Activated CD4-positive, alpha-beta memory T cell treated with anti-CD3 and anti-CD28 coated beads for 36 hours (primary cell): ENCODE measurements at regions of chr7 and their contacts with region 1.

Region 1: GRCh38 chr7:128387216-128388144 is 22.3 kb downstream of the IMPDH1 start:
- DNase-seq: peak; percentile 79
- H3K4me3 Mint-ChIP-seq: no peak overlapping the region
- H3K27ac Mint-ChIP-seq: no peak overlapping the region
- H3K4me1 Mint-ChIP-seq: no peaks in the 10 kb centered on the region
- H3K27me3 Mint-ChIP-seq: no peaks in the 10 kb centered on the region

Region 2: DNA sequence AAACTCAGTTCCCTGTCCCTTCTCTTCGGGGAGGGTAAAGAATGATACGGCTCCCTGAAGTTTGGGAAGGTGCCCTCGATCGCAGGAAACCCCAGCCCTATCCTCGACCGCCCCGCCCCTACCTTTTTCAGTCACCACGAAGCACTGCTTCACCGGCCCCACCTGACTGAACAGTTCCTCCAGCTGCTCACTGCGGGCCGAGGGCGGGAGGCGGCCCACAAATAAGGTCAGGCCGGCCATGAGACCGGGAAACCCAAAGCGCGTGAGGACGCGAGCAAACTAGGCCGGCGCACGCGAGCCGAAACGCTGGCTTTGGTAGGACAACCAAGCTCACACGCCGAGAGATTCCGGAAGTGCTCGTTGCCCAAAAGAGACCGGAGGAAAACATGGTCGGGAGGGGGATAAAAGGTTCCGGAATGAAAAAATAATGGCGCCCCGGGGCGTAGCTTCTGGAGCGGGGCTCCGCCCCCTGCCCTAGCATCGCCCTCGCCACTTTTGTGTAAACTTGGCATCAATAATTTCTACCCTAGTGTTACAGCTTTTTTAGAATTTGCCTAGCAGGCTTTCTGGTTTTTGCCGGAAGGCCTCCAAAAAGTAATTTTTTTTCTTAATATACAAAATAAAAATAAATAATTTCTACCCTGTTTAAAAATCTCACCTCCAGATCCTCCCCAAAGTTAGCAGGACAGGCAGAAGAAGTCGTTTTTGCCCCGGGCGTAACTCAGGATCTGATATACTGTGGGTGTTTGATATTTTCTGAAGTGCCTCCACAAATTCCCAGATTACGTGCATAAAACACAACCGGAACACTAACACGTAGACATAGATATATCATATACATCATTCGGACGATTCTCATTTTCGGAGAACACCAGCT is 43.7 kb before region 1 on chr7 and contains the start of gene RBM28:
- CTCF ChIA-PET with region 1: interaction called, 507 read pairs
- POLR2A ChIA-PET with region 1: interaction called, 9 read pairs
- intact Hi-C with region 1: loop called (anchors 1 kb)
- DNase-seq: peak; percentile 92
- H3K4me3 Mint-ChIP-seq: peak within 1 kb of the TSS; percentile 92
- H3K27ac Mint-ChIP-seq: peak within 1 kb of the TSS; percentile 88
- H3K4me1 Mint-ChIP-seq: peaks cover 24% of the 10 kb centered on the region
- H3K27me3 Mint-ChIP-seq: peaks cover 2% of the 10 kb centered on the region
- total RNA-seq, gene RBM28: 46.2 to 56.0 TPM

Region 3: GRCh38 chr7:128352153-128352537 is 35.3 kb before region 1 on chr7:
- CTCF ChIA-PET with region 1: interaction called, 507 read pairs
- POLR2A ChIA-PET with region 1: no interaction called
- intact Hi-C with region 1: loop called (anchors 1 kb)
- DNase-seq: peak; percentile 42
- H3K4me3 Mint-ChIP-seq: no peak overlapping the region
- H3K27ac Mint-ChIP-seq: no peak overlapping the region
- H3K4me1 Mint-ChIP-seq: peaks cover 5% of the 10 kb centered on the region
- H3K27me3 Mint-ChIP-seq: peaks cover 31% of the 10 kb centered on the region

Region 4: DNA sequence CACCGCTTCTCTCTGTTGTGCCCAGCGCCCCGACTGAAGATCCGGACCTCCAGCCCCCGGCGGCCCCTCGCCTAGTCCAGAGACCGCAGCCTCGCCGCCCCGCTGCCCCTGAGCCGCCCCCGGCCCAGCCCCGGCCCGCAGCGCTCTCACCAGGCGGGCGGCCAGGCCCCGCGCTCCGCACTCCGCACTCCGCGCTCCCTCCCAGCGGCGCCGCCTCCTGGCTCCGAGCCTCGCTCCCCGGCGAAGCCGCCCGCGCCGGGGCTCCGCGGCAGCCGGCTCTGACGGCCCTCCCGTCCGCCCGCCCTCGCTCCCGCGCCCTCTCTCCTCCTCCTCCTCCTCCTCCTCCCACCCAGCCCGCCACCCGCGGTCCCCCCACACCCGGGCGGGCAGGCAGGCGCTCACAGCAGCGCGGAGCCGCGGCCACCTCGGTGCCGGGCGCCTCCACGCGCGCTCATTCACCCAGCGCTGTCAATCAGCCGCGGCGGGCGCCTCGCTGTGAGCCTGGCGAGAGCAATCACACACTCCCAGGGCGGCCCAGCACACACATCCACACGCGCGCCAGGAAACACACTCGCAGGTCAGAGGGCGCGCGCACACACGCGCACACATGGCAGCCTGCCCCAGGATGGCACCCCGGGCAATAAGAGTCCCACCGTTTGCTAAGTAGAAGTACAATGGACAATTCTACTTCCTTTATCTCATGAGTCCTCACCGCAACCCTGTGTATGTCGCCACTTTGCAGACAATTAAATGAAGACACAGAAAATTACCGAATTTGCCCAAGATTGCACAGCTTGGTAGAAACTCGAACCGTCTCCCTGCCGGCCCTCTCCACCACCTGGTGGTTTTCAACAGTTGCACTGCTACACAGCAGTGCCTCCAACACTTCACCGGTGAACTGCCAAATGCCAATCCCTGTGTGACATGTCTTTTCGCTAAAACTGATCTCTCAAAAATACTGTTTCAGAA is 25.8 kb before region 1 on chr7 and contains the start of gene PRRT4:
- CTCF ChIA-PET with region 1: interaction called, 48 read pairs
- POLR2A ChIA-PET with region 1: no interaction called
- intact Hi-C with region 1: no loop called
- DNase-seq: peak; percentile 48
- H3K4me3 Mint-ChIP-seq: peak within 1 kb of the TSS; percentile 69
- H3K27ac Mint-ChIP-seq: no peak within 1 kb of the TSS
- H3K4me1 Mint-ChIP-seq: peaks cover 21% of the 10 kb centered on the region
- H3K27me3 Mint-ChIP-seq: peaks cover 42% of the 10 kb centered on the region
- total RNA-seq, gene PRRT4: 0.10 to 0.12 TPM

Region 5: GRCh38 chr7:128373606-128374005 is 13.9 kb before region 1 on chr7:
- CTCF ChIA-PET with region 1: interaction called, 20 read pairs
- POLR2A ChIA-PET with region 1: no interaction called
- intact Hi-C with region 1: no loop called
- DNase-seq: no peak
- H3K4me3 Mint-ChIP-seq: no peak overlapping the region
- H3K27ac Mint-ChIP-seq: no peak overlapping the region
- H3K4me1 Mint-ChIP-seq: no peaks in the 10 kb centered on the region
- H3K27me3 Mint-ChIP-seq: no peaks in the 10 kb centered on the region

Region 6: GRCh38 chr7:128398016-128398840 is 10.7 kb after region 1 on chr7:
- CTCF ChIA-PET with region 1: interaction called, 22 read pairs
- POLR2A ChIA-PET with region 1: no interaction called
- intact Hi-C with region 1: no loop called
- DNase-seq: peak; percentile 59
- H3K4me3 Mint-ChIP-seq: no peak overlapping the region
- H3K27ac Mint-ChIP-seq: no peak overlapping the region
- H3K4me1 Mint-ChIP-seq: peaks cover 5% of the 10 kb centered on the region
- H3K27me3 Mint-ChIP-seq: no peaks in the 10 kb centered on the region

Region 7: DNA sequence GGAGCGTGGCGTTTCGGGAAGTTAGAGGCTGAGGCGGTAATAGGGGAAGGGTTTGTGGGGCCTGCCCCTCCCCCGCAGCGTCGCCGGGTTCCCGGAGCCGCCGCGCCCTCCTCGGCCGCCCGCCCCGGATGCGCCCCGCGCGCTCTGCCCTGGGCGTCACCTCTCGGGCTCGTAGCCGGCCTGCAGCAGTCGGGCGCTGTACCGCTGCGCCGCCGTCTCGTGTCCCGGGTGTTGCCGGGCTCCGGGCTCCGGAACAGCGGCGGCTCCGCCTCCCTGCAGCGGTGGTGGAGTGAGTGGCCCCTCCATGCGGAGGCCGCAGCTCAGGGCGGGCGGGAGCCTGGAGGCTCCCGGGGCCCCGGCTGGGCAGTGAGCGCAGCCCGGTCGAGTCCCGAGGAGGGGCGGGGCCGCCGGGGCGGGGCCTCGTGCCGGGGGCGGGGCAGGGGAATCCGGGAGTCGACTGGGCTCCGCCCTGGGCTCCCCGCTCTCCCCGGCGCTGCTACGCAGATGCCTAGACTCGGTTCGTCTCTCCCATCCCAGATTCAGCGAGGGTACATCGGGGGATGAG is 22.2 kb after region 1 on chr7 and contains the start of gene IMPDH1:
- CTCF ChIA-PET with region 1: interaction called, 14 read pairs
- POLR2A ChIA-PET with region 1: no interaction called
- intact Hi-C with region 1: no loop called
- DNase-seq: peak; percentile 90
- H3K4me3 Mint-ChIP-seq: peak within 1 kb of the TSS; percentile 84
- H3K27ac Mint-ChIP-seq: peak within 1 kb of the TSS; percentile 60
- H3K4me1 Mint-ChIP-seq: peaks cover 28% of the 10 kb centered on the region
- H3K27me3 Mint-ChIP-seq: peaks cover 3% of the 10 kb centered on the region
- total RNA-seq, gene IMPDH1: 52.9 to 57.7 TPM